ENCODE measurements at regions of chr14 and their contacts with region 1.

Region 1: DNA sequence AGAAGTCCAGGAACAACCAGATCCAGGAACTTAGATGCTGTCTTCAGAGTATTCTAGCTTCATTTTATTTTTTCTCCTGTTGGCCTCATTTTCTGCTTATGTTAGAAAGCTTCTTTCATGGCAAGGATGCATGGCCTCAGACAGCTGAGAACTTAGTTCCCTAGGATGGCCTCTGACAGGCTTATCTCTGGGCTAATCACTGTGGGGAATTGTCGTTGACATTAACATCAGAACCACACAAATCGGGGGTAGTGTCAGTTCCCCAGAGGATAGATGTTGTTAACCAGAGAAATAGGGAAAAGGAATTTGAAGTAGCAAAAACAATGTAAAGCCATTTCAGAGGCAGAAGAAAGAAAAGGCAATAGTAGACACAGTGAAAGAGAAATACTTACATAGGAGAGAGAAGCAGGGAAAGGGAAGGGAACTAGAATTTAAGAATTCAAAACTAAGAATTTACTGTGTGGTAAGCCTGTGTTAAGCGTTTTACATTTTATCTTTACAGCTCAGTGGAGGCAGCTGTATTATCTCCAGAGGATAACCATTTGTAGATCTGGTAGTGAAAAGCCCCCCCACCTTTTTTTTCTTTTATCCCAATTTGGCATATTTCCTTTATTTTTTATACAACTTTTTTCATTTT is 21.8 kb downstream of the FUT8 start:
- DNase-seq: no peak
- ATAC-seq: no peak
- H3K4me3 ChIP-seq: no peak overlapping the region
- H3K27ac ChIP-seq: peak overlapping the region; percentile 71
- H3K4me1 ChIP-seq: peaks cover 39% of the 10 kb centered on the region
- H3K27me3 ChIP-seq: no peaks in the 10 kb centered on the region
- CTCF ChIP-seq: no peak
- EP300 ChIP-seq: no peak
- POLR2A ChIP-seq: no peak
- RAD21 ChIP-seq: no peak

Region 2: GRCh38 chr14:65421201-65421981 is 12.9 kb before region 1 on chr14:
- CTCF ChIA-PET with region 1: interaction called, 27 read pairs
- POLR2A ChIA-PET with region 1: interaction called, 4 read pairs
- RAD21 ChIA-PET with region 1: interaction called, 22 read pairs
- SMC1A ChIA-PET with region 1: interaction called, 19 read pairs
- in situ Hi-C with region 1: no loop called
- intact Hi-C with region 1: no loop called
- DNase-seq: no peak
- ATAC-seq: no peak
- H3K4me3 ChIP-seq: no peak overlapping the region
- H3K27ac ChIP-seq: no peak overlapping the region
- H3K4me1 ChIP-seq: 0 out of 2 replicates have a peak, but pooled peaks cover 3% of the 10 kb centered on the region
- H3K27me3 ChIP-seq: no peaks in the 10 kb centered on the region
- CTCF ChIP-seq: no peak
- EP300 ChIP-seq: no peak
- POLR2A ChIP-seq: no peak
- RAD21 ChIP-seq: no peak

Region 3: GRCh38 chr14:65446159-65446558 is 11.8 kb after region 1 on chr14:
- CTCF ChIA-PET with region 1: interaction called, 13 read pairs
- POLR2A ChIA-PET with region 1: no interaction called
- RAD21 ChIA-PET with region 1: interaction called, 4 read pairs
- SMC1A ChIA-PET with region 1: interaction called, 10 read pairs
- in situ Hi-C with region 1: no loop called
- intact Hi-C with region 1: no loop called
- DNase-seq: no peak
- ATAC-seq: no peak
- H3K4me3 ChIP-seq: no peak overlapping the region
- H3K27ac ChIP-seq: no peak overlapping the region
- H3K4me1 ChIP-seq: no peaks in the 10 kb centered on the region
- H3K27me3 ChIP-seq: no peaks in the 10 kb centered on the region
- CTCF ChIP-seq: no peak
- EP300 ChIP-seq: no peak
- POLR2A ChIP-seq: no peak
- RAD21 ChIP-seq: no peak

Measured in GM12878 (cell line).